Naive thymus-derived CD4-positive, alpha-beta T cell (primary cell): ENCODE measurements at regions of chr1 and their contacts with region 1.

Region 1: DNA sequence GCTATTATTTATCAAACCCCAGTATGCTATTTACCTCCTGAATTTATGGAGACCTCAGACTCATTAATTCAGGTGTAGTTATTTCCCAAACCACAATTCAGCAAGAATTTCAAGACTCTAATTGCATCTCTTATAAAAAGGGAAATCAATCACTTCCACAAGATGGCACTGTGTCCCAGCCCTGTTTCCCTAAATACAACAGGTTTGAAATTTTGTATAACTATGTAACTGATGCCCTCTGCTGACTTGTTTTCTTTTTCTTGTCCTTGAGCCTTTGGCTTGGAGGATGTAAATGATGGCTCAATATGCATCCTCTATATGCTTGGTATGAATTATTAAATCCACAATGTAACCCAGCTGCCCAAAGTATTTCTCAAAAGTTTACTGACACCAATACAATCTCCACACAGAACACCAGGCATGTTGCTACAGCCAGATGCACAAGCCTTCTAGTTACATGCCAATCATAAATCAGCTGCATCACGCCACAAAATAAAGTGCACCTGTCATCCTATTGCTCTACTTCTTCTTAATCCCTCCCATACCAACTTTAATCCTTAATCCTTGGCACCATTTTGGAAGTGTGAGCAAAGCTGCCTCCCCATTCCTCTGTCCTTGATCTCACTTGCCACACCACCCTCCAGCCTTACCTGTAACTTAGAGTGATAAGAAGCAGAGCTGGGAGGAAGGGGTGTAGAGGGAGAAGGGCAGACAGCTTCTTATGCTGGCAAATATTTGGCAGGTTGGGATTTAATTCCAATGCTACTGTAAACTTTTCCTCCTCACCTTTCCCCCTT is 9.0 kb downstream of the C1orf105 start:
- DNase-seq: peak in 7 of 9 donors; percentile 47 to 73 (median 65)
- ATAC-seq: peak; percentile 92
- H3K4me3 ChIP-seq: no peak overlapping the region
- H3K4me3 Mint-ChIP-seq: peak overlapping the region in 5 of 10 donors; percentile 16 to 57 (median 49)
- H3K27ac ChIP-seq: no peak overlapping the region
- H3K27ac Mint-ChIP-seq: peak overlapping the region in 5 of 9 donors; percentile 76 to 92 (median 84)
- H3K4me1 ChIP-seq: peaks cover 13 to 64% of the 10 kb centered on the region in 2 donors
- H3K4me1 Mint-ChIP-seq: peaks cover 0 to 46% (median 32%) of the 10 kb centered on the region in 7 donors
- H3K27me3 ChIP-seq: no peaks in the 10 kb centered on the region
- H3K27me3 Mint-ChIP-seq: no peaks in the 10 kb centered on the region

Region 2: DNA sequence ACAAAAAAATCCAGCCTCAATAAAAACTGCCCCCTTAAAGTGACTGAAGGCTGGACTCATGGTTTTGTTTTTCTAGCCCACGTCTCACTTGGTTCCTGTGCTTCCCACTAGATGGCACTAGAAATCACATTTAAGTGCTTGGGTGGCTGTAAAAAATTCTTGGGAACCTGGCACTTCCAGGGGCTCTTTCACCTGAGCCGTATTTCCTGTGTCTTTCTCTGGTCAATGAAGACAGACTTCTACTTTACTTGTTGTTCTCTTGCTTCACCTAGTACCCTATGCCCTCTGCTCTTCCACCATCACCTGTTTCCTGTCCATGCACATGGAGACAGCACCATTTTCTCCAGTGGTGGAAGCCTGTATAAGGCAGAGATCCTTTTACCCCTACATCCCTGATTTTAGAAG is 628.0 kb before region 1 on chr1:
- CTCF ChIA-PET with region 1: interaction called, 3 read pairs
- POLR2A ChIA-PET with region 1: no interaction called
- intact Hi-C with region 1: loop called in 1 of 2 experiments (anchors 1 kb)
- DNase-seq: peak in 3 of 9 donors; percentile 12 to 17 (median 13)
- ATAC-seq: no peak
- H3K4me3 ChIP-seq: no peak overlapping the region
- H3K4me3 Mint-ChIP-seq: no peak overlapping the region
- H3K27ac ChIP-seq: no peak overlapping the region
- H3K27ac Mint-ChIP-seq: peak overlapping the region in 5 of 9 donors; percentile 25 to 80 (median 40)
- H3K4me1 ChIP-seq: peaks cover 0 to 3% of the 10 kb centered on the region in 2 donors
- H3K4me1 Mint-ChIP-seq: peaks cover 0 to 13% (median 8%) of the 10 kb centered on the region in 7 donors
- H3K27me3 ChIP-seq: no peaks in the 10 kb centered on the region
- H3K27me3 Mint-ChIP-seq: no peaks in the 10 kb centered on the region

Region 3: DNA sequence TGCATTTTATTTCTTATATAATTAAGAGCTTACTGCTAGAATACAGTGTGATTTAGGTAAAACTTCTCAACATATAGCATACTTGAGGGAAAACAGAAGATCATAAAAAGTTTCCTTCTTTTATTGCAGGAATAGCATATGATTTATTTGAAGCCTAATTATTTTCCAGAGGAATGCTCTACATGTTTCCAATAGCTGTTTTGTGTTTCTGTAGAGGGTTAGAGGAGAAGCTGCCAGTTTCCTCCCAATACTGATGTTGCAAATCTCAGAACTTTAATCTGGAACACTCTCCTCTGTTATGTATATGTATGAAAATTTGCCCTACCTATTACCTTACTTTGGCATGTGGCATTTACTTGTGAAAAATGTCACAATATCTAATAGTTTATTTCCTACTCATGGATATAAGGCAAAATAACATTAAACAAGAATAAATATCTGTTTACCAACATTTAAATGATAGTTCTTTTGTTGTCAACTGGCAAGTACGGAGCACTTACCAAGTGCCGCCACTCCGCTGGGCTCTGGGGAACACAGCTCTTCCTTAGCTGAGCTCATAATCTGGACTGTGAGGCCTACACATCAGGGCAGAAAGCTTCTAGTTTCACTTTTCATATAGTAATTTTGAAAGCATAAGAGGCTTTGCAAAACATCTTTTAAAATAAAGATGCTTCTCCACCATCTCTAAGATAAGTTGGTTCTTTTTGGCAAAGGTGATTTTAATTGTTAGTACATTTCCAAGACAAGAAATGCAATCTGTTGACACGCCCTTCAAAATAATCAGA is 248.8 kb before region 1 on chr1:
- CTCF ChIA-PET with region 1: interaction called, 3 read pairs
- POLR2A ChIA-PET with region 1: interaction called, 4 read pairs
- intact Hi-C with region 1: loop called in 1 of 2 experiments (anchors 2 kb)
- DNase-seq: peak in 8 of 9 donors; percentile 18 to 50 (median 40)
- ATAC-seq: peak; percentile 72
- H3K4me3 ChIP-seq: peak overlapping the region; percentile 56
- H3K4me3 Mint-ChIP-seq: peak overlapping the region; percentile 61 to 91 (median 82)
- H3K27ac ChIP-seq: peak overlapping the region; percentile 80
- H3K27ac Mint-ChIP-seq: peak overlapping the region; percentile 95 to 99 (median 97)
- H3K4me1 ChIP-seq: peaks cover 21 to 23% of the 10 kb centered on the region in 2 donors
- H3K4me1 Mint-ChIP-seq: peaks cover 26 to 59% (median 45%) of the 10 kb centered on the region in 7 donors
- H3K27me3 ChIP-seq: no peaks in the 10 kb centered on the region
- H3K27me3 Mint-ChIP-seq: no peaks in the 10 kb centered on the region

Region 4: GRCh38 chr1:172398970-172399755 is 30.4 kb before region 1 on chr1:
- CTCF ChIA-PET with region 1: interaction called, 17 read pairs
- POLR2A ChIA-PET with region 1: interaction called, 7 read pairs
- intact Hi-C with region 1: loop called (anchors 1 to 2 kb)
- DNase-seq: peak in 7 of 9 donors; percentile 20 to 57 (median 46)
- ATAC-seq: peak; percentile 49
- H3K4me3 ChIP-seq: peak overlapping the region; percentile 12
- H3K4me3 Mint-ChIP-seq: peak overlapping the region; percentile 43 to 79 (median 64)
- H3K27ac ChIP-seq: no peak overlapping the region
- H3K27ac Mint-ChIP-seq: peak overlapping the region; percentile 60 to 100 (median 89)
- H3K4me1 ChIP-seq: peaks cover 30 to 46% of the 10 kb centered on the region in 2 donors
- H3K4me1 Mint-ChIP-seq: peaks cover 31 to 85% (median 72%) of the 10 kb centered on the region in 7 donors
- H3K27me3 ChIP-seq: no peaks in the 10 kb centered on the region
- H3K27me3 Mint-ChIP-seq: peaks cover 0 to 2% (median 0%) of the 10 kb centered on the region in 5 donors

Region 5: DNA sequence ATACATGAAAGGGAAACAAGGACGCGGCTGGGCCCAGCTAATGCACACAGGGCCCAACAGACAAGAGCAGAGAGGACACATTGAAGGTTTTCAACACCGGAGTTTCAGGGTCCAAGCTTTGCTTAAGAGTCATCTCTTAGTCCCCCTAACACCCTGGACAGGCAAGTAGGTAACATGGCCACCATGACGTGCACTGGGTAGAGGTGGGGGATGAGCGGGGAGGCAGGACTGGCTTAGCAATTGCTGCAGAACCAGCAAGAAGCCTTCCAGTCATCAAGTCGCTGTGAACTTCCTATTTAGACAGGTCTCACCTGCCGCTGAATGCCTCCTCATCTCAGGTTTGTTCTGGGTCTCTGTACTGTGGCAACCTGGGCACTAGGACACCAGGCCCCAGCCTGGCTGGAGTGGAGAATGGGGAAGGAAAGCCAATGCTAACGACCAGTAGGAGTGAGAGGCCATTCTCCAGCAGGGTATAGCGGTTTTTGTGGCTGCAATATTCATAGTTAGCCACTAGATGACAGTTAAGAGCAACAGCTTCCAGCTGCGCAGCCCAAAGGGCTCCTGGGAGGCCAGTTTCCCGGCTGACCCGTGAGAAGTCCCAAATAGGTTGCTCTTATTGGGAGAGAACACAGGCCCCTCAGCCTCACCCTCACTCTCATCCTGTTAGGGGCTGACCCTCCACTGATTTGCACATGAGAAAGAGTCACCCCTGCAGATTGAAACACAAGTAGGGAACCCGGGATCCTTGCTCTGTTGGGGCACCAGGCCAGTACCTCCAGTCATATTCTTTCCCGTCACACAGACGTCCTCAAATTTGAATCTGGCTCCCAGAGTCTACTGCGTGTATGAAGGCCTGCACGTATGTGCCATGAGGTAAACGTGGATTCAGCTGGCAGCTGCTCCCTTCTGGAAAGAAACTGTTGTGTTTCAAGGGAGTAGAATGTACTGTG is 20.3 kb after region 1 on chr1:
- CTCF ChIA-PET with region 1: interaction called, 120 read pairs
- POLR2A ChIA-PET with region 1: interaction called, 85 read pairs
- intact Hi-C with region 1: no loop called
- DNase-seq: peak in 7 of 9 donors; percentile 22 to 42 (median 32)
- ATAC-seq: peak; percentile 90
- H3K4me3 ChIP-seq: no peak overlapping the region
- H3K4me3 Mint-ChIP-seq: peak overlapping the region in 4 of 10 donors; percentile 35 to 67 (median 56)
- H3K27ac ChIP-seq: no peak overlapping the region
- H3K27ac Mint-ChIP-seq: peak overlapping the region in 4 of 9 donors; percentile 45 to 90 (median 87)
- H3K4me1 ChIP-seq: no peaks in the 10 kb centered on the region
- H3K4me1 Mint-ChIP-seq: peaks cover 0 to 23% (median 18%) of the 10 kb centered on the region in 7 donors
- H3K27me3 ChIP-seq: no peaks in the 10 kb centered on the region
- H3K27me3 Mint-ChIP-seq: peaks cover 0 to 3% (median 0%) of the 10 kb centered on the region in 5 donors

Region 6: DNA sequence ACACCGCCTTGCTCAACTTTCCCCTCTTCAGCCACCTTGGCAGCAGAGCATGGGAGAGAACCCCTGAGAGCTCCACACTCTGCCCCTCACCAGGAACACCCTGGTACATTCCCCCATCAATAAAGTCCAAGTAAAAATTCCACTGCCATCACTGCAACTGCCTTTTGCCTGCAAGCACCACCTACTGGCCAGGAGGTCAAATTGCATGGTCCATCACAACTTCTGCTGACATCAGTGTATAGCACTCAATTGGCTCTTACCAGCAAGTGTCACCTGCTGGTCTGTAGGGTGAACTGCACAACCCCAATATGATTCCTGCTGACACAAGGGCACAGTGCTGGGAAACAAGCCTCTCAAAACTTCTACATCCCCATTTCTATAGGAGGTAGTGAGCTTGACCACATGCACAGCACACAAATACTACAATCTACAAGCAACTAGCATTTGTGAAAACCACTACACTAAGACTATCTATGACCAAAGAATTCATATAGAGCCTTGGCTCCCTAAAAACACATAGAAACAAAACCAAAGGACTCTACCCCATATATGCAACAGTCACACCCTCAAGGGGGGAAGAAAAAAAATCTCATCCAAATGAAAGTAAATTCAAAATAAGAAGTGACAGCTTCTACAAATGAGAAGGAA is 298.6 kb after region 1 on chr1:
- CTCF ChIA-PET with region 1: no interaction called
- POLR2A ChIA-PET with region 1: no interaction called
- intact Hi-C with region 1: loop called in 1 of 2 experiments (anchors 5 kb)
- DNase-seq: peak in 6 of 9 donors; percentile 23 to 42 (median 38)
- ATAC-seq: peak; percentile 88
- H3K4me3 ChIP-seq: no peak overlapping the region
- H3K4me3 Mint-ChIP-seq: no peak overlapping the region
- H3K27ac ChIP-seq: no peak overlapping the region
- H3K27ac Mint-ChIP-seq: peak overlapping the region in 1 of 9 donors; percentile 1
- H3K4me1 ChIP-seq: peaks cover 0 to 6% of the 10 kb centered on the region in 2 donors
- H3K4me1 Mint-ChIP-seq: peaks cover 7 to 25% (median 15%) of the 10 kb centered on the region in 7 donors
- H3K27me3 ChIP-seq: no peaks in the 10 kb centered on the region
- H3K27me3 Mint-ChIP-seq: peaks cover 0 to 42% (median 0%) of the 10 kb centered on the region in 5 donors